ENCODE measurements at regions of chr18 and their contacts with region 1.

Region 1: DNA sequence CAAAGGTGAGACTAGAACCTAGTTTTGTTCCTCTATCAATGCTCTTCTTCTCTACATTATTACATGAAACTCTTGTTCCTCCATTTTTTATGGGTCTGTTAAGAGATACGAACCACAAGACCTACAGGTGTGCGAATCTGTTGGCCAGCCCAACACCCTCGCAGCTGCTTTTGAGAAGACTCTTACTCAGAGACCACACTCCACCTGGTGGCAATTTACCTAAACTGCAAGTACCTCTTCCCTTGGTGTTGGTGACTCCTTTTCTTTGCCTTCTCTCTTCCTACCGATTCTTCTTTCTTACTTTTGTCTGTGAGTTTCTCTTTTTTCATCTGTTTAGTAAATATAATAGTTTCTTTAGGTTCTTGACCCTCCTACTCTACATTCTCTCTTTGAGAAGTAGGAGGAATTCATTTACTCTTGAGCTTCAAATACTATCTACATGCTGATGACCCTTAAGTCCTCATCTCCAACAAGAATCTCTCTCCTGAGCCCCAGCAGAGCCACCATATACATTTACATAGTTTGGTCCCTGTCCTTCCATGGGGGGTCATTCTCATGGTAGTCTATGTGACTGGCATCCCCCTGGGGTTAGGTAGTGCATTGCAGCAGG is 81.8 kb upstream of the GAREM1 start:
- DNase-seq: peak in 2 of 5 donors; percentile 13 to 49
- H3K4me3 ChIP-seq: no peak overlapping the region
- H3K27ac ChIP-seq: no peak overlapping the region
- H3K4me1 ChIP-seq: no peaks in the 10 kb centered on the region
- H3K27me3 ChIP-seq: no peaks in the 10 kb centered on the region
- CTCF ChIP-seq: peak in 1 of 3 donors; percentile 28
- EP300 ChIP-seq: no peak
- POLR2A ChIP-seq: no peak

Region 2: DNA sequence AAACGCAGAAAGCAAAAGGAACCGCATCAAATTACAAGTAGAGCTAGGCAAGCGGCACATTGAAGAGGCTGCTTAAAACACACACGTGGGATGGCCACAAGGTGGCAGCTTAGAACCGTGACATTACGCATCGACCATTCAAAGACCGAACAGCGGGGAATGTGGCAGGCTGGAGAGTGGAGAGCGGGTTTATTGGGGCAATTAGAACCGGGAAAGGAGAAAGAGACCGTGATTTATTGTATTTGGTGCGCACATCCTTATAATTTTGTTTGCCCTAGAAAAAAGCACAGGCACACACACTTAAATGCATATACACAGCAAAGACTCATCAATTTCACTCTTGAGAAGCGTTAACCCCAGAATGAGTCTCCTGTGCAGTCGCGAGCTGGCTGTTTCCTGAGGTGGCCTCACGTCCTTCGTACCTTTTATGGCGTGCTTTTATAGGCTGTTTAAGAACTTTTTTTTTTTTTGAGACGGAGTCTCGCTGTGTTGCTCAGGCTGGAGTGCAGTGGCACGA is 394.4 kb before region 1 on chr18:
- intact Hi-C with region 1: loop called (anchors 2 to 5 kb)
- DNase-seq: peak; percentile 65 to 80 (median 79)
- H3K4me3 ChIP-seq: peak overlapping the region; percentile 20
- H3K27ac ChIP-seq: no peak overlapping the region
- H3K4me1 ChIP-seq: no peaks in the 10 kb centered on the region
- H3K27me3 ChIP-seq: no peaks in the 10 kb centered on the region
- CTCF ChIP-seq: peak; percentile 69 to 83 (median 77)
- EP300 ChIP-seq: no peak
- POLR2A ChIP-seq: no peak

Region 3: DNA sequence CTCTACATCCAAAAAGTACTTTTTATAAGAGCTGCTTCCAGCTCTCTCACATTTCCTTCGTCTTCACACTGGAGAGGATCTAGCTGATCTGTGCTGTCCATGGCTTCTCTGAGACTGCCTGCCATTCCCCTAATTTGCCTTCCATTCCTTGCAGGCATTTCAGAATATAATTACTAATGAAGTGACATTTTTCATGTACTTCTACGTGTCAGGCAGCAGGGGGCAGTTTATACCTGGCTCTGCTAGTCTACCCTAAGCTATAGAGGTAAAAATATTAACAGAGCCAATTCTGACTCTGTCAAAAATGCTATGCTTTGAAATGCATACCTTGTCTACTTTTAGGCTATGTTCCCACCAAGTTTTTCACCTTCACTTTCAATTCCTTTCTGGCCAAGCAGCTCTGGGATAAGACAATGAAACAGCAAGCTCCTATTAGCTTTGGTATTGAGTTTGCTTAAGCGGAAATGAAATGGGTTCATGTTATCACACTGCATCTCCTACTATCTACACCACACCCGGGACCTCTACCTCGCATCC is 280.8 kb before region 1 on chr18:
- intact Hi-C with region 1: loop called in 3 of 4 experiments (anchors 5 to 10 kb)
- DNase-seq: peak in 3 of 5 donors; percentile 27 to 50 (median 38)
- H3K4me3 ChIP-seq: no peak overlapping the region
- H3K27ac ChIP-seq: no peak overlapping the region
- H3K4me1 ChIP-seq: no peaks in the 10 kb centered on the region
- H3K27me3 ChIP-seq: no peaks in the 10 kb centered on the region
- CTCF ChIP-seq: peak; percentile 48 to 81 (median 73)
- EP300 ChIP-seq: no peak
- POLR2A ChIP-seq: no peak

Region 4: DNA sequence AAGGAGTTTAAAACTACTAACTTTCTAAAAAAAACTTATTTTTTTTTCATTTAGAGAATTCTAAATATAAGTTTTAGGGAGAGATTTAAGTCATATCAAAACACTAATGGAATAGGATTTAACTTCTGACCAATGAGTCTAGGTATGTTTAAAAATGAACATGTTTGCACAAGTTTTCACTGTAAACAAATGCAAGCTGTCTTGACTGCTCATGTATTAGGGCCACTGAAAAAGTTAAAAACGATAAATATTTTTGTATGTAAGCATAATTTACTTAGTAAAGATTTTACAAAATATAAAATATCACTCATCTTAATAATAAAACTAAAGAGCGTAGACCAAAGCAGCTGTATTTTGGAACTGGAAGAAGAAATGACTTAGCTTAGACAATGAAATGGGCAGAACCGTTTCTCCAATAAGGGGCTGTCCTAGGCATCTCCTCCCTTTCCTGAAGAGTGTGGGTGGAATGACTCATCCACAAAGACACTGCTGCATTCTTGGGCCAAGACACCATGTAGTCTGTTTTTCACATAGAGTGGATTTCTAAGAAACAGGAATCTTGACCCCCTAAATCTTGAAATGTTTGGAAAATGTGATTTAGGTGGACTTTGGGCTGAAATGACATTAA is 243.9 kb before region 1 on chr18:
- intact Hi-C with region 1: no loop called
- DNase-seq: peak in 1 of 5 donors; percentile 51
- H3K4me3 ChIP-seq: no peak overlapping the region
- H3K27ac ChIP-seq: no peak overlapping the region
- H3K4me1 ChIP-seq: peaks cover 5% of the 10 kb centered on the region
- H3K27me3 ChIP-seq: no peaks in the 10 kb centered on the region
- CTCF ChIP-seq: no peak
- EP300 ChIP-seq: no peak
- POLR2A ChIP-seq: no peak